Mammary epithelial cell (primary cell): ENCODE measurements at regions of chr22 and their contacts with region 1.

Region 1: GRCh38 chr22:46542011-46542985 is 4.9 kb upstream of the CELSR1 start:
- DNase-seq: peak; percentile 61
- H3K4me3 ChIP-seq: no peak overlapping the region
- H3K27ac ChIP-seq: peak overlapping the region; percentile 42
- H3K4me1 ChIP-seq: peaks cover 49% of the 10 kb centered on the region
- H3K27me3 ChIP-seq: no peaks in the 10 kb centered on the region
- CTCF ChIP-seq: peak; percentile 89 to 97

Region 2: GRCh38 chr22:45994491-45995404 is 547.5 kb before region 1 on chr22:
- CTCF ChIA-PET with region 1: no interaction called
- dilution Hi-C with region 1: no loop called
- in situ Hi-C with region 1: no loop called
- intact Hi-C with region 1: loop called (anchors 2 kb)
- DNase-seq: peak; percentile 40
- H3K4me3 ChIP-seq: no peak overlapping the region
- H3K27ac ChIP-seq: no peak overlapping the region
- H3K4me1 ChIP-seq: peaks cover 9% of the 10 kb centered on the region
- H3K27me3 ChIP-seq: no peaks in the 10 kb centered on the region
- CTCF ChIP-seq: peak; percentile 94 to 96

Region 3: DNA sequence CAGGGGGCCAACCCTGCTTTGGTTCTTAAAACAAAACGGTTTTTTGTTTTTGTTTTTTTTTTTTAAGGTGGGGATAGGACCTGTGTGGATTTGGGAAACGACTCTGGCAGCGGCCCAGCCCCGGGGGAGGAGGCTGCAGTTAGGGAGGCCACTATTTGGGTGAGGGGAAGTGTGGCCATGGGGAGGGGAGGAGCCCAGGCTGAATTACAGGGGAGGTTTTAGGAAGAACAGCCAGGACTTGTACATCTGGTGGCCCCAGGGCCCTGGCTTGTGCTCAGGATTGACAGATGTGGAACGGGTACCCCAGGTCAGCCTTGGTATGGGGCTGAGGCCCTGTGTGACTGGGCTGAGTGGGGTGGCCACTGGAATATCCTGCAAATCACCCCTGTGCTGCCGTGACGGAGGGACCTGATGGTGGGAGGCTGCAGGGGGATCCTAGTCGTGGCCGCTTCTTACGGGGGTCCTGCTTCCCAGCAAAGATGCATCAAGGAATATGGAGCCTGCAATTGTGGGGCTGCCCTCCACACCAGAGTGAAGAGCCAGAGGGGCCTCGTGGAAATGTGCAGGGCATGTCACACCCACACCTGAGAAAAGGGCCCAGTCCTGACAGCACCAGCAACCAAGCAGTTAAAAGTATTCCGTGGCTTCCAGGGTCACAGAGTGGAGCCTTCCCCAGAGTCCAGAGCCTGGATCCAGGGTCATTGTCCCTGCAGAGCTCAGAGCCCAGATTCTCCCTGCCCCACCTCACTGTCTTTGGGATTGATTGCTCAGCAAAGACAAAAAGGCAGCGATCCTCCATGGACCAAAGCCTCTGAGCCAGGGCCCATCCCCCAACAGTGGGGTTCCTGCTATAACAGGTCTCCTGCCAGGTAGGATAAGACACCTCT is 510.1 kb before region 1 on chr22:
- CTCF ChIA-PET with region 1: no interaction called
- dilution Hi-C with region 1: no loop called
- in situ Hi-C with region 1: no loop called
- intact Hi-C with region 1: no loop called
- DNase-seq: no peak
- H3K4me3 ChIP-seq: no peak overlapping the region
- H3K27ac ChIP-seq: no peak overlapping the region
- H3K4me1 ChIP-seq: peaks cover 23% of the 10 kb centered on the region
- H3K27me3 ChIP-seq: no peaks in the 10 kb centered on the region
- CTCF ChIP-seq: no peak

Region 4: DNA sequence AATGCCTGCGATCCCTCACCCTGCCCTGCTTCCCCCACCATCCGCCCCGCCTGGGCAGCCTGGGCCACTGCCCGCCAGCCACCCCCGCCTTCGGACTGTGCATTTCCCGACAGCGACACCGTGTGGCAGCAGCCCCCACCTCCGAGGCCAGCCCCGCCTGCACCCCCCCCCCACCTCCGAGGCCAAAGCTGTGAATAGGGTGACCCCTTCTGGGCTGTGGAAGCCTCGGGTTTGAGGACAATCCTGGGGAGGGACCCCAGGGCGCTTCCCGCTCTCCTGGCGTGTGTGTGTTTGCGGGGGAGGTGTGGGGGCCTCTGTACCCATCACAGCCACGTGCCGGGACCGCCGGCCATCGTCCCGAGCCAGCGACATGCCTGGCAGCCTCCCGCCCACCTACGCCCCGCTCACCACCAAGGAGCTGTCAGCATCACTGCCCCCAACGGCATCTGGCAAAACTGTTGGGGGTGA is 425.8 kb before region 1 on chr22:
- CTCF ChIA-PET with region 1: no interaction called
- dilution Hi-C with region 1: no loop called
- in situ Hi-C with region 1: loop called in 1 of 2 experiments (anchors 25 kb)
- intact Hi-C with region 1: no loop called
- DNase-seq: peak; percentile 63
- H3K4me3 ChIP-seq: no peak overlapping the region
- H3K27ac ChIP-seq: no peak overlapping the region
- H3K4me1 ChIP-seq: peaks cover 30% of the 10 kb centered on the region
- H3K27me3 ChIP-seq: no peaks in the 10 kb centered on the region
- CTCF ChIP-seq: peak; percentile 29 to 83

Region 5: GRCh38 chr22:46355371-46355995 is 186.8 kb before region 1 on chr22:
- CTCF ChIA-PET with region 1: interaction called, 3 read pairs
- dilution Hi-C with region 1: no loop called
- in situ Hi-C with region 1: loop called in 1 of 2 experiments (anchors 5 kb)
- intact Hi-C with region 1: loop called (anchors 1 kb)
- DNase-seq: peak; percentile 56
- H3K4me3 ChIP-seq: no peak overlapping the region
- H3K27ac ChIP-seq: no peak overlapping the region
- H3K4me1 ChIP-seq: peaks cover 26% of the 10 kb centered on the region
- H3K27me3 ChIP-seq: no peaks in the 10 kb centered on the region
- CTCF ChIP-seq: peak; percentile 68 to 90

Region 6: GRCh38 chr22:46367707-46368191 is 174.5 kb before region 1 on chr22:
- CTCF ChIA-PET with region 1: interaction called, 20 read pairs
- dilution Hi-C with region 1: no loop called
- in situ Hi-C with region 1: loop called (anchors 5 kb)
- intact Hi-C with region 1: loop called (anchors 1 kb)
- DNase-seq: peak; percentile 66
- H3K4me3 ChIP-seq: no peak overlapping the region
- H3K27ac ChIP-seq: no peak overlapping the region
- H3K4me1 ChIP-seq: no peaks in the 10 kb centered on the region
- H3K27me3 ChIP-seq: no peaks in the 10 kb centered on the region
- CTCF ChIP-seq: peak; percentile 96 to 98

Region 7: GRCh38 chr22:46457524-46458488 is 84.5 kb before region 1 on chr22:
- CTCF ChIA-PET with region 1: no interaction called
- dilution Hi-C with region 1: no loop called
- in situ Hi-C with region 1: loop called (anchors 5 to 10 kb)
- intact Hi-C with region 1: loop called (anchors 1 kb)
- DNase-seq: peak; percentile 93
- H3K4me3 ChIP-seq: no peak overlapping the region
- H3K27ac ChIP-seq: no peak overlapping the region
- H3K4me1 ChIP-seq: peaks cover 47% of the 10 kb centered on the region
- H3K27me3 ChIP-seq: no peaks in the 10 kb centered on the region
- CTCF ChIP-seq: no peak

Region 8: DNA sequence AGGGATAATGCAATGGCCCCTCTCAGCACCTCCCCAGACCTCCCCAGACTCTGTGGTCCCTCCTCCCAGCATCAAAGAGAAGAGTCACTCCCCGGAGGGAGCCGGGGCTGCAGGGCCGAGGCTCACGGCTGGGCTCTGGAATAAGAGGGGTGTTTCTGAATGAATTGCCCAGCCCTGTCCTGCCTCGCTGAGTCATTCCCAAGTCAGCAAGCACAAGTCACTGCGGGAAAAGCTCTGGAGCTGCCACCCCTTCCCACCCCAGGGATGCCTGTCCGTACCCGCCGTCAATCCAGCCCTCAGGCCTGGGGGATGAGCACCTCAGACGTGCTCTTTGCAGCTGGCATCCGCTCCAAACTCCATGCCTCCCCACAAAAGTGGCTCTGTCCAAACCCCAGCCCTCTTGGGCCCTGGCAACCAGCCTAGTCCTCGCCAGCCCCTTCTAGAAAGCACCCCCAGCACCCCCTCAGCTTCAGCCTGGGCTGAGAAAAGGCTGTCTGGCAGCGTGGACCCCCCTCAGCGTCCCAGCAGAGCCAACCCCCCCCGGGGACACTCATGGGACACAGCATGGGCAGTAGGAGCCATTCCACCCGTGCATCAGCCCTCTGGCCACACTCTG is 27.6 kb before region 1 on chr22:
- CTCF ChIA-PET with region 1: no interaction called
- dilution Hi-C with region 1: no loop called
- in situ Hi-C with region 1: no loop called
- intact Hi-C with region 1: loop called (anchors 1 kb)
- DNase-seq: peak; percentile 97
- H3K4me3 ChIP-seq: peak overlapping the region in 2 of 3 experiments; percentile 31 to 37
- H3K27ac ChIP-seq: peak overlapping the region; percentile 69
- H3K4me1 ChIP-seq: peaks cover 25% of the 10 kb centered on the region
- H3K27me3 ChIP-seq: no peaks in the 10 kb centered on the region
- CTCF ChIP-seq: no peak